ENCODE measurements at regions of chr7 and their contacts with region 1.

Region 1: DNA sequence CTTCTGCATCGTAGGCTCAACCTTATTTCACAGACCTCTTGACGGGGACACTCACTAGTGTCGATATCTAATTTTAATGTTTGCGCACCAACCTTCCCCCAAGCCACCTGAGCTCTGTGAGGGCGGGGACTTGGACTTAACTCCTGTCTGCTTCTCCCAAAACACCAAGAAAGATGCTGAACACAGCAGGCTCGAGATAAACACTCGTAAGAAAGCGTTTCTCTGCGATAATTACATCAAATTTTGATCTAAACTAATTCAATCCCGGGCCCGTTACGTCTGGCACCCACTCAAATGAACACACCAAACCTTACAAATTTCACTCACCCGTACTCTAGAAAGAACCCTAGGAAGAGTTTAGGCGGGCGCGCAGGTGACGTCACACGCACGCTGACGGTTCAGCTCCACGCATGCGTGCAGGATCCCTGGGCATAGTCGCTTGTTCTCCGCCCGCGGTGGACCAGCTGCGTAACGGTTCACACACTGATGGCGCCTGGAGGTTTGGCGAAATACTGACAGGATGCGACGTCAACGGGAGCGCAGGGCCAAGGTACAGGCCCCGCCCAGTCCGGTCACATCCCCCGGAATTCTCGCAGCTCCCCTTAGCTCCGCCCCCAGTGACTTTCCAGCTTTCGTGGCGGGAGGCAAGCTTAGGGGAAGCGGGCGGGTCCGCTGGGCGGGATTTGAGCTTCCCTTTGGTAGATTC is at the start of gene POT1:
- DNase-seq: peak; percentile 99
- H3K4me3 ChIP-seq: peak within 1 kb of the TSS; percentile 85
- H3K27ac ChIP-seq: peak within 1 kb of the TSS; percentile 84
- H3K27me3 ChIP-seq: no peaks in the 10 kb centered on the region
- CTCF ChIP-seq: no peak
- polyA plus RNA-seq, gene POT1: 24.4 and 36.5 TPM in 2 replicates

Region 2: DNA sequence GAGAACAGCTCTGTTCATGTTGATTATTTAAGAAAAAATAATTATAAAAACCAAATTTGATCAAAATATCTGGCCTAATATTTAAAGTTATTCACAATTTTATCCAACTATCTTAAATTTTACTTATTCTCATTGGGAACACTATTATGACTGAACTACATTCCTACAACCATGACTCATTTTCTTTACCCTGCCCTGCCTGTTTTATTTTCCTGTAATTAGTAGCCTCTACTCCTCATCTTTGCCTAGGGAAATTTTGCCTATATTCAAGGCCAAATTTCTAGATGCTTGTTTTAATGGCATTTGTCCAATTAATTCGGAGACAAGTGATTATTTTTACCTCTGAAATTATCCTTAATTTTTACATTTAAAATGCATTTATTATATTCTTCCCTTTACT is 607.1 kb before region 1 on chr7:
- CTCF ChIA-PET with region 1: no interaction called
- POLR2A ChIA-PET with region 1: no interaction called
- DNase-seq: no peak
- H3K4me3 ChIP-seq: no peak overlapping the region
- H3K27ac ChIP-seq: no peak overlapping the region
- H3K27me3 ChIP-seq: no peaks in the 10 kb centered on the region
- CTCF ChIP-seq: no peak

Region 3: DNA sequence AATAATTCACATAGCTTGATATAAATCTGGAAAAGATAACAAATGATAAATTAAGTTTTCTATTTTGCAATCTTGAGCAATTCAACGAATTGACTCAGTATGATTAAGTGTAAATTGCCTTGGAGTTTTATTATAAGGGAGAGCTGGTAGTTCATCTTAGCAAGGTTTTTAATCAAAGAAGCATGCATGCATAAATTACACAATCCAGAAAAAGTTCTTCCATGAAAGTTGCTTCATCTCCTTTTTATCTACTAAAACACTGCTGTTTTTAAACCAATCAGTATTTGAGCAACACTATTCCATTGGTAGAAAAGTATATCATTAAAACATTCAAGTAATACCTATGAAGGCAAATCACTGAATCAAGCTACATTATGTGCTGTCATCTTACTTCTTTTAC is 47.6 kb before region 1 on chr7:
- CTCF ChIA-PET with region 1: no interaction called
- POLR2A ChIA-PET with region 1: interaction called, 13 read pairs
- DNase-seq: no peak
- H3K4me3 ChIP-seq: no peak overlapping the region
- H3K27ac ChIP-seq: no peak overlapping the region
- H3K27me3 ChIP-seq: no peaks in the 10 kb centered on the region
- CTCF ChIP-seq: no peak